Pancreas (tissue), 10 donors: ENCODE measurements at regions of chr1 and their contacts with region 1.

Region 1: DNA sequence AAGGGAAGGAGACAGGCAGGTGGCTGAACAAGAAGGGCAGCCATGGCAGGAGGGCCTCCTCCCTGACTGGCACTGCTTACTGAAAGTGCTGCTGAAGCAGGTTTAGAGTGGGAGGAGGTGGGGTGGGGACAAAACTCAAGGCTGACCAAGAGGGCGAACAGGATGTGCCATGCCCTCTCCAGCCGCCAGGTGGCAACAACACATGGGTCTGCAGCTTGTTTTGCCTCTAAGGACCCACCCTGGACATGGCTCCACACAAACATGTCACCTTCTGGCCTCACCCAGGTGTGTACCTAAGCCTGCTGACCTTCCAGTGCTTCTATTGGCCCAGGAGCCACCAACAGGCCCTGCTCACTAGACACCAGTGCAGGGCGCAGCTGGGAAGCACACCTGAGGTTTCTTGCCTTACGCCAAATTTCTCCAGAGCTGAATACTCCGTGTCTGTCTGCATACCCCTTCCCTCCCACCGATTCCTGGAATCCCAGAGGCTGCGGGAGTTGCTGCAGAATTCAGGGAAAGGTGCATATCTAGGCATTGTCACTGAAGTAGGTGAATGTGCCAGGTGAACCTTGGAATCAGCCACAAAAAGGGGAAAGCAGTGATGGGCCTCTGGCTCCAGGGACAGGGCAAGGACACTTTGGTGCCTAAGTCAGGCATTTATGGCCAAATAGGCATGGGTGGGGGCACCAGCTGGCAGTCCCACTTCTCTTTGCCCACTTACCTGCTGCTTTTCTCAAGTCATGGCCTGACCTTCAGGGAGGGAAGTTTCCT is 5.3 kb downstream of the PSRC1 start:
- DNase-seq: peak; percentile 79 to 91 (median 87)
- ATAC-seq: peak; percentile 85 to 88 (median 87)
- H3K4me3 ChIP-seq: no peak overlapping the region
- H3K27ac ChIP-seq: peak overlapping the region in 1 of 4 donors; percentile 54
- H3K4me1 ChIP-seq: peaks cover 0 to 9% (median 6%) of the 10 kb centered on the region in 3 donors
- H3K27me3 ChIP-seq: no peaks in the 10 kb centered on the region
- CTCF ChIP-seq: peak; percentile 71 to 87 (median 77)

Region 2: GRCh38 chr1:109404838-109405237 is 127.2 kb after region 1 on chr1:
- intact Hi-C with region 1: loop called in 1 of 3 experiments (anchors 5 kb)
- DNase-seq: no peak
- ATAC-seq: no peak
- H3K4me3 ChIP-seq: no peak overlapping the region
- H3K27ac ChIP-seq: no peak overlapping the region
- H3K4me1 ChIP-seq: no peaks in the 10 kb centered on the region
- H3K27me3 ChIP-seq: no peaks in the 10 kb centered on the region
- CTCF ChIP-seq: no peak